PC-3 (cell line): ENCODE measurements at regions of chr6 and their contacts with region 1.

Region 1: GRCh38 chr6:22636452-22636851 is 67.1 kb downstream of the HDGFL1 start:
- DNase-seq: no peak
- ATAC-seq: no peak
- H3K4me3 ChIP-seq: no peak overlapping the region
- H3K27ac ChIP-seq: no peak overlapping the region
- H3K4me1 ChIP-seq: no peaks in the 10 kb centered on the region
- H3K27me3 ChIP-seq: no peaks in the 10 kb centered on the region
- CTCF ChIP-seq: no peak

Region 2: DNA sequence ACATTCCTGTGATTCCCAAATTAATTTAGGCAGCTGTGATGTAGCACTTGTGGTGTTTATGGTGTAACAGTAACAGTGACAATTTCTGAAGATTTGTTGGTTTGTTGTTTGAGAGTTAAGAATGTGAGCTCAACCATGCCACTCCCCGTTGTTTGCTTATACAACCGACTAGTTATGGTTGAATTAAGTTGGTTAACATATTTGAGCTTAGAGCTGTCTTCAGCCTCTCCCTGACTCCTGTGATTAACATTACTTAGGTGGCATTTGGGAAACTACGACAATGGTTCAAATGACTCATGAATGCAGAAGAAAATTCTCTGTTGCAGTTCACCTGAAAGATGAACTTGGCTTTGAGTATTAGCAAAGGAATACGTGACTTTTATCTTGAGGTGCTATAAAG is 303.7 kb before region 1 on chr6:
- CTCF ChIA-PET with region 1: no interaction called
- POLR2A ChIA-PET with region 1: interaction called, 17 read pairs
- intact Hi-C with region 1: no loop called
- DNase-seq: peak; percentile 47
- ATAC-seq: peak; percentile 56; the same call in 1 of the 2 replicates
- H3K4me3 ChIP-seq: no peak overlapping the region
- H3K27ac ChIP-seq: no peak overlapping the region
- H3K4me1 ChIP-seq: peaks cover 9% of the 10 kb centered on the region
- H3K27me3 ChIP-seq: no peaks in the 10 kb centered on the region
- CTCF ChIP-seq: no peak

Region 3: GRCh38 chr6:22506496-22506895 is 130.0 kb before region 1 on chr6:
- CTCF ChIA-PET with region 1: no interaction called
- POLR2A ChIA-PET with region 1: no interaction called
- intact Hi-C with region 1: no loop called
- DNase-seq: no peak
- ATAC-seq: no peak
- H3K4me3 ChIP-seq: no peak overlapping the region
- H3K27ac ChIP-seq: no peak overlapping the region
- H3K4me1 ChIP-seq: no peaks in the 10 kb centered on the region
- H3K27me3 ChIP-seq: no peaks in the 10 kb centered on the region
- CTCF ChIP-seq: no peak